Pancreas (tissue), 10 donors: ENCODE measurements at regions of chr2 and their contacts with region 1.

Region 1: DNA sequence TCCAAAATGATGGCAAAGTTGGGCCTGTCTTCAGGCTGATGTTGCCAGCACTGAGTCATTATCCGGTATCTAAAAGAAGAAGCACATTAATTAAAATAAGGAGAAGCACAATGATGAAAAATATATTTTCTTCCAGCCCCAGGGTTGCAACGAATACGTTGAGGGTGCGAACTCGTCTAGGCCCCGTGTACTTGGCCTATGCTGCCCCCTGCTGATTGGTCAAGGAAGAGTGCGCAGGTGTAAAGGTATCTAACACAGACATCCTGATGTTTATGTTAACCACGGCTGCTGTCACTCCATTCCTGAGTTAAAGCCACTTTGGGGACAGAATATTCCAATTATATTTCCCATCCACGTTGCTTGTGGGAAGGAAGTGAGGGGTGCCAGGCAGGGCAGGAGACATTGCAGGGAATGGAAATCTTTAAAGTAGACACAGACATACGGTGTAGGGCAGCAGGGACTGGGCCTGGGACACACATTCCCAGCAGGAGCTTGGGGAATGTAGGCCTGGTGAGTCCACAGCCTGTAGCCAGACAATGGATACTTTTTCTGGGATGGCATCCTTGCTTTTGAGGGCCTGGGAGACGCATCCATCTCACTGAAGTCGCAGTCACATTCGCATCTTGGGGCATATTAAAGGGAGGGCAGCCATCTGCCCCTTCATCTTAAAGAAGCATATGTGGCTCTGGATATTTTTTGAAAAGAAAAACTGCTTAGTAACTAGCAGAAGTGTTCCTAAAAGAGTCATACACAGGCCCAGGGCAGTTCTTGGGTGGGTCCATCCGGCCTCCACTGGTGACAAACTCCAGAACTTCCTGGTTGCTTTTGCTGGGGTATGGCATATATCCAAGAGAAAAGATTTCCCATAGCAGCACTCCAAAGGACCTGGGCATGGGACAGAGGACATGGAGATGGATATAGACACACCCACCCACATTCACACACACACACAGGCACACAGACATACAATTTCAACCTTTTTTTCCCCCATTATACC is 81.9 kb downstream of the CLIP4 start:
- DNase-seq: peak; percentile 47 to 82 (median 66)
- ATAC-seq: peak; percentile 61 to 97 (median 94)
- H3K4me3 ChIP-seq: no peak overlapping the region
- H3K27ac ChIP-seq: no peak overlapping the region
- H3K4me1 ChIP-seq: no peaks in the 10 kb centered on the region
- H3K27me3 ChIP-seq: no peaks in the 10 kb centered on the region
- CTCF ChIP-seq: peak; percentile 54 to 67 (median 56)

Region 2: GRCh38 chr2:28716265-28716867 is 480.7 kb before region 1 on chr2:
- intact Hi-C with region 1: no loop called
- DNase-seq: peak in 3 of 6 donors; percentile 46 to 67 (median 59)
- ATAC-seq: peak; percentile 82 to 92 (median 89)
- H3K4me3 ChIP-seq: no peak overlapping the region
- H3K27ac ChIP-seq: peak overlapping the region; percentile 65 to 87 (median 76)
- H3K4me1 ChIP-seq: peaks cover 5 to 18% (median 5%) of the 10 kb centered on the region in 3 donors
- H3K27me3 ChIP-seq: no peaks in the 10 kb centered on the region
- CTCF ChIP-seq: no peak

Region 3: GRCh38 chr2:28958689-28959088 is 238.4 kb before region 1 on chr2:
- intact Hi-C with region 1: loop called (anchors 5 to 10 kb)
- DNase-seq: peak in 2 of 6 donors; percentile 18 to 50
- ATAC-seq: peak; percentile 81 to 96 (median 94)
- H3K4me3 ChIP-seq: no peak overlapping the region
- H3K27ac ChIP-seq: no peak overlapping the region
- H3K4me1 ChIP-seq: no peaks in the 10 kb centered on the region
- H3K27me3 ChIP-seq: no peaks in the 10 kb centered on the region
- CTCF ChIP-seq: peak; percentile 39 to 62 (median 40)

Region 4: GRCh38 chr2:29053670-29054400 is 143.3 kb before region 1 on chr2:
- intact Hi-C with region 1: no loop called
- DNase-seq: no peak
- ATAC-seq: peak in 2 of 4 donors; percentile 17 to 20
- H3K4me3 ChIP-seq: no peak overlapping the region
- H3K27ac ChIP-seq: no peak overlapping the region
- H3K4me1 ChIP-seq: no peaks in the 10 kb centered on the region
- H3K27me3 ChIP-seq: no peaks in the 10 kb centered on the region
- CTCF ChIP-seq: no peak